ENCODE measurements at regions of chr11 and their contacts with region 1.

Region 1: DNA sequence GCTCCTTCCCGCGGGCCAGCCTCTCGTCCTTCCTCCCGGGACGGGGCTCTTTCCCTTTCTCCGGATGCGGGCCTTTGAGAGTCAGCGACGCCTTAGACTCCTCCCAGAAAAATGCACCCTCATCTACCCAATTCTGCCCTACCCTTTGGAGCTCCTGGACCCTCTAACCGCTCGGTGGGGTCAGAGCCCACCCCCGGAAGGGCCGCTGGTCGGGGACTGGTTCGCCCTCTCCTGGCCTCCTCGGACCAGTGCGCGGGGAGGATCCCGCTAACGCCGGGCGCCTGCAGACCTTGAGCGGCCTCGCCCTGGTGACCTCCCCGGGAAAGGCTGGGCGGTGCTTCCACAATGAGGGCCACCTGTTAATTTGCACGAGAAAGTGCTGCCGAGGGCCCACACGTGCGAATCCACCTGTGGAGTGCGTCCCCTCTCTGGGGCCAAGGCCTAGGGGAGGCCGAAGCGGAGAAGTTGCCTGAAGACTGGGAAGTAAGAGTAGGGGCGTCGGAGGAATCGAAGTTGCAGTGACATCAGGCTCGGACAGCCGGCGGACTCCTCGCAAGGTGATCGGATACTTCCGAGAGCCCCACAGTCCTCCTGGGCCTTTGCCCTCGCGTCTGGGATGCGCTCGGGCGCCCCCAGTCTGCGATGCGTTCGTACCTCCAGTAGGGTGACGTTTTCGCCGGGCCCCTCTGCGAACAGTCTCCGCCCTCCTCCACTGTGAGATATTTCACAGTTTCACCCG is 61.5 kb downstream of the ENDOD1 start:
- DNase-seq: peak; percentile 77
- ATAC-seq: peak; percentile 89
- H3K4me3 ChIP-seq: peak overlapping the region; percentile 80
- H3K27ac ChIP-seq: peak overlapping the region; percentile 56
- H3K4me1 ChIP-seq: peaks cover 2% of the 10 kb centered on the region; the same call in 1 of the 2 replicates
- H3K27me3 ChIP-seq: no peaks in the 10 kb centered on the region
- CTCF ChIP-seq: peak; percentile 79 to 97 (median 87)
- EP300 ChIP-seq: no peak
- POLR2A ChIP-seq: peak; percentile 75
- RAD21 ChIP-seq: peak; percentile 38; the same call in 1 of the 2 replicates

Region 2: DNA sequence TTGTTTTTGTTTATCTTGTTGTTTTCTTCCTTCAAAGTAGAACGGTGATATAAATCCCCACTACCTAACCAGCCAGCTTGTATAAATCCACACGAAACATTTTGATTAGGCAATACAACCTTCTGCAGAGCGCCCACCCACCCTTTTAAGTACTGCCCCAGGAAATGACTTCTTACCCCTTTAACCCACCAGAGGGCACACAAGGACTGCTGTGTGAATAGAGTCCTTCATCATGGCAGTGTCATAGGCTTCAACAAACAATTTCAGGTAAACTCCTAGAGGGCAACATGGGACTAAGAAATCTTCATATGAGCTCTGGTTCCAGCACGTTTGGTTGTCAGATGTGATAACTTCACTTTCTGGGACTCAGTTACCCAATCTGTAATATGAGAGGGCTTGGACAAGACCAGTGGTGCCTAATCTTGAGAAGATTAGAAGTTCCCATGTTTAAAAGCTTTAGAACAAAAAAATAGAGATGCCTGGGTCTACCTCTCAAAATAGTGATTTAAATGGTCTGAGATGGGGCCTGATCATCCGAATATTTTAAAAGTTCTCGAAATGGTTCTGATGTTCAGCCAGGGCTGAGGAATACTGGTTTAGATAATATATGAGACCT is 527.9 kb before region 1 on chr11:
- CTCF ChIA-PET with region 1: interaction called, 8 read pairs
- POLR2A ChIA-PET with region 1: no interaction called
- RAD21 ChIA-PET with region 1: interaction called, 5 read pairs
- SMC1A ChIA-PET with region 1: interaction called, 3 read pairs
- in situ Hi-C with region 1: no loop called
- intact Hi-C with region 1: loop called (anchors 1 kb)
- DNase-seq: peak; percentile 16
- ATAC-seq: peak; percentile 97
- H3K4me3 ChIP-seq: no peak overlapping the region
- H3K27ac ChIP-seq: no peak overlapping the region
- H3K4me1 ChIP-seq: no peaks in the 10 kb centered on the region
- H3K27me3 ChIP-seq: no peaks in the 10 kb centered on the region
- CTCF ChIP-seq: peak; percentile 66 to 72 (median 69)
- EP300 ChIP-seq: no peak
- POLR2A ChIP-seq: no peak
- RAD21 ChIP-seq: peak; percentile 95

Region 3: GRCh38 chr11:95003716-95004115 is 147.4 kb before region 1 on chr11:
- CTCF ChIA-PET with region 1: no interaction called
- POLR2A ChIA-PET with region 1: no interaction called
- RAD21 ChIA-PET with region 1: no interaction called
- SMC1A ChIA-PET with region 1: no interaction called
- in situ Hi-C with region 1: no loop called
- intact Hi-C with region 1: no loop called
- DNase-seq: no peak
- ATAC-seq: no peak
- H3K4me3 ChIP-seq: no peak overlapping the region
- H3K27ac ChIP-seq: no peak overlapping the region
- H3K4me1 ChIP-seq: no peaks in the 10 kb centered on the region
- H3K27me3 ChIP-seq: no peaks in the 10 kb centered on the region; a peak in 1 of 4 replicates
- CTCF ChIP-seq: no peak
- EP300 ChIP-seq: no peak
- POLR2A ChIP-seq: no peak
- RAD21 ChIP-seq: no peak

Region 4: GRCh38 chr11:95121698-95122097 is 29.4 kb before region 1 on chr11:
- CTCF ChIA-PET with region 1: no interaction called
- POLR2A ChIA-PET with region 1: no interaction called
- RAD21 ChIA-PET with region 1: no interaction called
- SMC1A ChIA-PET with region 1: no interaction called
- in situ Hi-C with region 1: no loop called
- intact Hi-C with region 1: no loop called
- DNase-seq: no peak
- ATAC-seq: no peak
- H3K4me3 ChIP-seq: no peak overlapping the region
- H3K27ac ChIP-seq: no peak overlapping the region
- H3K4me1 ChIP-seq: no peaks in the 10 kb centered on the region
- H3K27me3 ChIP-seq: no peaks in the 10 kb centered on the region
- CTCF ChIP-seq: no peak
- EP300 ChIP-seq: no peak
- POLR2A ChIP-seq: no peak
- RAD21 ChIP-seq: no peak

Region 5: GRCh38 chr11:95163106-95163505 is 12.0 kb after region 1 on chr11:
- CTCF ChIA-PET with region 1: interaction called, 13 read pairs
- POLR2A ChIA-PET with region 1: no interaction called
- RAD21 ChIA-PET with region 1: interaction called, 6 read pairs
- SMC1A ChIA-PET with region 1: interaction called, 14 read pairs
- in situ Hi-C with region 1: no loop called
- intact Hi-C with region 1: no loop called
- DNase-seq: no peak
- ATAC-seq: no peak
- H3K4me3 ChIP-seq: no peak overlapping the region
- H3K27ac ChIP-seq: no peak overlapping the region
- H3K4me1 ChIP-seq: no peaks in the 10 kb centered on the region
- H3K27me3 ChIP-seq: no peaks in the 10 kb centered on the region; a peak in 1 of 4 replicates
- CTCF ChIP-seq: no peak
- EP300 ChIP-seq: no peak
- POLR2A ChIP-seq: no peak
- RAD21 ChIP-seq: no peak

Region 6: GRCh38 chr11:95248666-95249467 is 97.8 kb after region 1 on chr11:
- CTCF ChIA-PET with region 1: interaction called, 13 read pairs
- POLR2A ChIA-PET with region 1: interaction called, 3 read pairs
- RAD21 ChIA-PET with region 1: interaction called, 14 read pairs
- SMC1A ChIA-PET with region 1: interaction called, 31 read pairs
- in situ Hi-C with region 1: no loop called
- intact Hi-C with region 1: loop called (anchors 2 kb)
- DNase-seq: peak; percentile 74
- ATAC-seq: peak; percentile 85
- H3K4me3 ChIP-seq: peak overlapping the region; percentile 41; the same call in 1 of the 2 replicates
- H3K27ac ChIP-seq: peak overlapping the region; percentile 63
- H3K4me1 ChIP-seq: peaks cover 35% of the 10 kb centered on the region
- H3K27me3 ChIP-seq: no peaks in the 10 kb centered on the region
- CTCF ChIP-seq: no peak
- EP300 ChIP-seq: peak in 1 of 2 experiments; percentile 73; a peak in 1 of 4 replicates
- POLR2A ChIP-seq: no peak
- RAD21 ChIP-seq: no peak

Region 7: GRCh38 chr11:95375886-95376285 is 224.8 kb after region 1 on chr11:
- CTCF ChIA-PET with region 1: interaction called, 12 read pairs
- POLR2A ChIA-PET with region 1: no interaction called
- RAD21 ChIA-PET with region 1: interaction called, 7 read pairs
- SMC1A ChIA-PET with region 1: interaction called, 16 read pairs
- in situ Hi-C with region 1: no loop called
- intact Hi-C with region 1: no loop called
- DNase-seq: no peak
- ATAC-seq: no peak
- H3K4me3 ChIP-seq: no peak overlapping the region
- H3K27ac ChIP-seq: no peak overlapping the region
- H3K4me1 ChIP-seq: no peaks in the 10 kb centered on the region
- H3K27me3 ChIP-seq: peaks cover 0 to 1% of the 10 kb centered on the region in 2 experiments; a peak in 1 of 4 replicates
- CTCF ChIP-seq: no peak
- EP300 ChIP-seq: no peak
- POLR2A ChIP-seq: no peak
- RAD21 ChIP-seq: no peak

Region 8: DNA sequence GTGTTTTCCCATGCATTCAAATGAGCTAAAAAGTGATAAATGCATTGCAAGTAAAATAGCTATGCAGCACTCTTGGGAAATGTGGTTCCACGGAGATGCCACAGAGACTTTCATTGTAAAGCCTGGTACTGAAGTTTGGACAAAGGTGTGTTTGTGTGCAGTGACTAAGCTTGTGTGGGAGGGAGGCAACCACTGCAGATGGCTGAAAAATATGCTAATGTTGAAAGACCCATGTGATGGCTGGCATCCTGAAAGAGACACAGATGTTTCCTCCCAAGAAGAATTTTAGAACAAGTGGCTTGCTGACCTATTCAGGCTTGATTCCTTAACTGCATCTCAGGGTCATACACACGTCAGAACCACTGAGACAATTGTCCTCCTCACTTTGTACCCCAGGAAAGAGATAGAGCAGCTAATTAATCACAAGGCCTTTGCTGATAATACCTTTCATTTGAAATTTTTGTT is 564.7 kb after region 1 on chr11:
- CTCF ChIA-PET with region 1: interaction called, 590 read pairs
- POLR2A ChIA-PET with region 1: interaction called, 20 read pairs
- RAD21 ChIA-PET with region 1: interaction called, 425 read pairs
- SMC1A ChIA-PET with region 1: interaction called, 474 read pairs
- in situ Hi-C with region 1: no loop called
- intact Hi-C with region 1: no loop called
- DNase-seq: peak; percentile 89
- ATAC-seq: peak; percentile 84
- H3K4me3 ChIP-seq: no peak overlapping the region
- H3K27ac ChIP-seq: no peak overlapping the region
- H3K4me1 ChIP-seq: peaks cover 26% of the 10 kb centered on the region
- H3K27me3 ChIP-seq: no peaks in the 10 kb centered on the region
- CTCF ChIP-seq: no peak
- EP300 ChIP-seq: peak; percentile 87 to 89; a peak in 3 of 4 replicates
- POLR2A ChIP-seq: no peak
- RAD21 ChIP-seq: no peak

Region 9: GRCh38 chr11:95912902-95913560 is 761.9 kb after region 1 on chr11:
- CTCF ChIA-PET with region 1: no interaction called
- POLR2A ChIA-PET with region 1: no interaction called
- RAD21 ChIA-PET with region 1: no interaction called
- SMC1A ChIA-PET with region 1: no interaction called
- in situ Hi-C with region 1: no loop called
- intact Hi-C with region 1: no loop called
- DNase-seq: no peak
- ATAC-seq: no peak; the same call in 2 of the 3 replicates
- H3K4me3 ChIP-seq: no peak overlapping the region
- H3K27ac ChIP-seq: no peak overlapping the region
- H3K4me1 ChIP-seq: no peaks in the 10 kb centered on the region
- H3K27me3 ChIP-seq: no peaks in the 10 kb centered on the region
- CTCF ChIP-seq: no peak
- EP300 ChIP-seq: no peak
- POLR2A ChIP-seq: no peak
- RAD21 ChIP-seq: no peak

Region 10: GRCh38 chr11:95923728-95924413 is 772.8 kb after region 1 on chr11 and contains the start of gene MTMR2:
- CTCF ChIA-PET with region 1: no interaction called
- POLR2A ChIA-PET with region 1: no interaction called
- RAD21 ChIA-PET with region 1: no interaction called
- SMC1A ChIA-PET with region 1: no interaction called
- in situ Hi-C with region 1: no loop called
- intact Hi-C with region 1: loop called (anchors 5 kb)
- DNase-seq: peak; percentile 16
- ATAC-seq: peak; percentile 99
- H3K4me3 ChIP-seq: peak within 1 kb of the TSS; percentile 94
- H3K27ac ChIP-seq: peak within 1 kb of the TSS; percentile 90
- H3K4me1 ChIP-seq: no peaks in the 10 kb centered on the region
- H3K27me3 ChIP-seq: no peaks in the 10 kb centered on the region
- CTCF ChIP-seq: no peak
- EP300 ChIP-seq: peak in 1 of 2 experiments; percentile 23; a peak in 1 of 4 replicates
- POLR2A ChIP-seq: peak; percentile 100
- RAD21 ChIP-seq: no peak
- polyA plus RNA-seq, gene MTMR2: 7.6 to 9.8 TPM